ENCODE measurements at regions of chr16 and their contacts with region 1.

Region 1: GRCh38 chr16:48623304-48624016 is 13.5 kb upstream of the N4BP1 start:
- DNase-seq: peak; percentile 79
- H3K4me3 Mint-ChIP-seq: peak overlapping the region; percentile 71
- H3K27ac Mint-ChIP-seq: peak overlapping the region; percentile 77
- H3K4me1 Mint-ChIP-seq: peaks cover 11% of the 10 kb centered on the region
- H3K27me3 Mint-ChIP-seq: no peaks in the 10 kb centered on the region
- CTCF ChIP-seq: peak; percentile 96

Region 2: GRCh38 chr16:48244080-48244862 is 379.2 kb before region 1 on chr16 and contains the start of gene LONP2:
- CTCF ChIA-PET with region 1: no interaction called
- POLR2A ChIA-PET with region 1: interaction called, 3 read pairs
- intact Hi-C with region 1: loop called (anchors 2 kb)
- DNase-seq: peak; percentile 92
- H3K4me3 Mint-ChIP-seq: peak within 1 kb of the TSS; percentile 91
- H3K27ac Mint-ChIP-seq: peak within 1 kb of the TSS; percentile 91
- H3K4me1 Mint-ChIP-seq: peaks cover 15% of the 10 kb centered on the region
- H3K27me3 Mint-ChIP-seq: no peaks in the 10 kb centered on the region
- CTCF ChIP-seq: no peak
- total RNA-seq, gene LONP2: 55.6 and 58.8 TPM in 2 replicates

Region 3: GRCh38 chr16:48365581-48366164 is 257.8 kb before region 1 on chr16:
- CTCF ChIA-PET with region 1: interaction called, 15 read pairs
- POLR2A ChIA-PET with region 1: interaction called, 10 read pairs
- intact Hi-C with region 1: loop called (anchors 5 kb)
- DNase-seq: peak; percentile 91
- H3K4me3 Mint-ChIP-seq: peak overlapping the region; percentile 80
- H3K27ac Mint-ChIP-seq: peak overlapping the region; percentile 95
- H3K4me1 Mint-ChIP-seq: peaks cover 44% of the 10 kb centered on the region
- H3K27me3 Mint-ChIP-seq: no peaks in the 10 kb centered on the region
- CTCF ChIP-seq: no peak

Region 4: GRCh38 chr16:48526058-48526957 is 97.2 kb before region 1 on chr16:
- CTCF ChIA-PET with region 1: interaction called, 46 read pairs
- POLR2A ChIA-PET with region 1: interaction called, 3 read pairs
- intact Hi-C with region 1: loop called (anchors 1 kb)
- DNase-seq: peak; percentile 84
- H3K4me3 Mint-ChIP-seq: no peak overlapping the region
- H3K27ac Mint-ChIP-seq: no peak overlapping the region
- H3K4me1 Mint-ChIP-seq: peaks cover 12% of the 10 kb centered on the region
- H3K27me3 Mint-ChIP-seq: no peaks in the 10 kb centered on the region
- CTCF ChIP-seq: peak; percentile 69

Region 5: GRCh38 chr16:48542020-48542473 is 81.4 kb before region 1 on chr16:
- CTCF ChIA-PET with region 1: interaction called, 31 read pairs
- POLR2A ChIA-PET with region 1: interaction called, 5 read pairs
- intact Hi-C with region 1: loop called (anchors 1 kb)
- DNase-seq: peak; percentile 47
- H3K4me3 Mint-ChIP-seq: no peak overlapping the region
- H3K27ac Mint-ChIP-seq: peak overlapping the region; percentile 63
- H3K4me1 Mint-ChIP-seq: no peaks in the 10 kb centered on the region
- H3K27me3 Mint-ChIP-seq: no peaks in the 10 kb centered on the region
- CTCF ChIP-seq: peak; percentile 35

Region 6: DNA sequence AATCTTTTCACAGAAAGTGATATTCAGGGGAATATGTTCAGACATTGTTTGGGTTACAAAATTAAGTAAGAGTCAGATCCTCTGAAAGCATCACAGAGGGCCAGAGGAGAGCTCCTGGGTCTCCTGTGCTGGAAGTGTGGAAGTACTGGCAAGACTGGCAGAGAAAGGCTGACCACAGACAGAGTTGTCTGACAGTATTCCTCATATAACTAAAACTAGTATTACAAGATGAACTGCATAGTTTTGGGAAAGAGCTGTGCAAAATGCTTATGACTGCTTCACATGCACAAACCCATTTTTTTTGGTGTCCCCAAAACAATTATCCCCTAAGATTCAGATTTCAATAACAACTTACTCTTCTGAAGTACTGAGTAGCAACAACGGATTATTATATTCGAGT is 48.7 kb before region 1 on chr16:
- CTCF ChIA-PET with region 1: interaction called, 18 read pairs
- POLR2A ChIA-PET with region 1: no interaction called
- intact Hi-C with region 1: no loop called
- DNase-seq: no peak
- H3K4me3 Mint-ChIP-seq: no peak overlapping the region
- H3K27ac Mint-ChIP-seq: no peak overlapping the region
- H3K4me1 Mint-ChIP-seq: peaks cover 36% of the 10 kb centered on the region
- H3K27me3 Mint-ChIP-seq: no peaks in the 10 kb centered on the region
- CTCF ChIP-seq: no peak

Region 7: DNA sequence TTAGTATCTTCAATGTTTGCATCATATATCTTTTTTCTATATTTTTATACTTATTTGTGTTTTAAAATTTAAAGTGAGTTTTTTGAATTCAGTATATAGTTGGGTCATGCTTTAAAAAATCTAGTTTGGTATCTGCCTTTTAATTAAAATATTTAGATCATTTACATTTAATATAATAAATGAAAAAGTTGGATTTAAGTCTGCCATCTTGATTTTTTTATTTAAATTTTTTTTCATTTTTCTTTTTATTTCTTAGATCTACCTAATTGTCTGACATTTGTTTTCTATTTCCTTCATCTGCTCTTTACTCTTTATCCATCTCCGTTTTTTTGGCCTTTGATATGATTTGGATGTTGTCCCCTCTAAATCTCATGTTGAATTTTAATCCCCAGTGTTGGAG is 36.5 kb after region 1 on chr16:
- CTCF ChIA-PET with region 1: no interaction called
- POLR2A ChIA-PET with region 1: no interaction called
- intact Hi-C with region 1: no loop called
- DNase-seq: no peak
- H3K4me3 Mint-ChIP-seq: no peak overlapping the region
- H3K27ac Mint-ChIP-seq: no peak overlapping the region
- H3K4me1 Mint-ChIP-seq: no peaks in the 10 kb centered on the region
- H3K27me3 Mint-ChIP-seq: peaks cover 4% of the 10 kb centered on the region
- CTCF ChIP-seq: no peak

Measured in MCF 10A (cell line).